Activated naive CD4-positive, alpha-beta T cell treated with anti-CD3 and anti-CD28 coated beads for 36 hours (primary cell): ENCODE measurements at regions of chrX and their contacts with region 1.

Region 1: DNA sequence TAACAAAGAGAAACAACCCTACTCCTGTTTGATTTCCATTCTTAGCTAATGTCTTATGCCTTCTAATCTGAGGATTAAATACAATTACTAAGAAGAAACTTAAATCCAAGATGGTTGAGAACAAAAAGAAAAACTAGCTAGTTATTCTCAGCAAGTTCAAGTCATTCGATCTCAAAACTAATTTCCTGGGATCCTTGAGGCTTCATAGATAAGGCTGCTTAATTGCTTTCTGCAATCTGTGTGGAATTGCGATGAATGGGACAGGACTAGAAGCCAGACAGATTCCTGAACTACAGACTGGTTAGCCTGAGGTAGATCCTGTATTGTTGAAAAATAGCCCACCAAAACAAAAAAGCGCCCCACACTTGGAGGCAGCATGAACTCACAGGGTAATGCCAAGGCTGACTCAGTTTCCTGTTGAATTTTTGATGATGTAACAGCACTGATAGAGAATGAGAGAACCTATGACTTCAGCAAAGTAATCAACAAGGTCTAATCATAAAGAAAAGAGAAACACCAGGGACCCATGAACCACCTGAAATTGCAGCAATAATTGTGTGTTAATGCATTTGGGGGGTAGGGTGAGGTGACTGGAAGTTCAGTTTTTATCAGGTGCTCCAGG is 33.9 kb downstream of the KLHL15 start:
- DNase-seq: peak; percentile 14
- H3K4me3 Mint-ChIP-seq: no peak overlapping the region
- H3K27ac Mint-ChIP-seq: peak overlapping the region; percentile 83
- H3K4me1 Mint-ChIP-seq: peaks cover 38% of the 10 kb centered on the region
- H3K27me3 Mint-ChIP-seq: no peaks in the 10 kb centered on the region

Region 2: DNA sequence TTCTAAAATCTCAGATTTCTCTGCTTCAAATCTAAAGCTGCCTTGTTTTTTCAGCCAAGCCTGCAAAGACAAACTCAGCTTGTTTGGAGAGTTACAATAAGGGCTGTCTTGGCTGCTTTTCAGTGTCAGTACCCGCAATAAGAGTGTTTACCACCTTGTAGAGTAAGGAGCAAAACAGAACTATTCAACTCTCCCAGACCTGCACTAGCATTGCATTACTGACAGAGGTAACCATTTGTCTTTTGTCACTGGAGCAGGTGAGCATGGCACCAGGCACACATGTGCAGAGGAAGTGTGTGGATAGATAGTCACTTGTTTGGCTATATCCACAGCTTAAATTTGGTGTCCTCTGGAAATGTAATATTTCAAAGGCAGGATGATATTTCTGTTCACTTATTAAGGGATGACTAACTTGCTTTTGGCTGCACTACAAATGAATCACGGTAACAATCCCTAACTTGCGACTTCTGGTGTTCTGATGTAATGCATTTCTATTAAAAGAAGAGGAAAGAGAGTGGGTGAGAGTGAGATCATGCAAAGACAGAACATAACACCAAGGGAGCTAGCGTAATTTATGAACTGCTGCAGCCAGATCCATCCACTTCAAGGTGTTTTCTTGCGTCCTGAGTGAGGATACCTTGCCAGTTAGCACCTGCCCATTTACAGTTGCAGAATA is 619.9 kb before region 1 on chrX:
- CTCF ChIA-PET with region 1: no interaction called
- intact Hi-C with region 1: no loop called
- DNase-seq: no peak
- H3K4me3 Mint-ChIP-seq: no peak overlapping the region
- H3K27ac Mint-ChIP-seq: no peak overlapping the region
- H3K4me1 Mint-ChIP-seq: no peaks in the 10 kb centered on the region
- H3K27me3 Mint-ChIP-seq: peaks cover 6% of the 10 kb centered on the region

Region 3: GRCh38 chrX:23667239-23668177 is 325.6 kb before region 1 on chrX and contains the start of gene PRDX4:
- CTCF ChIA-PET with region 1: no interaction called
- intact Hi-C with region 1: no loop called
- DNase-seq: peak; percentile 82
- H3K4me3 Mint-ChIP-seq: peak within 1 kb of the TSS; percentile 84
- H3K27ac Mint-ChIP-seq: peak within 1 kb of the TSS; percentile 90
- H3K4me1 Mint-ChIP-seq: peaks cover 30% of the 10 kb centered on the region
- H3K27me3 Mint-ChIP-seq: no peaks in the 10 kb centered on the region
- total RNA-seq, gene PRDX4: 39.6 to 40.0 TPM

Region 4: DNA sequence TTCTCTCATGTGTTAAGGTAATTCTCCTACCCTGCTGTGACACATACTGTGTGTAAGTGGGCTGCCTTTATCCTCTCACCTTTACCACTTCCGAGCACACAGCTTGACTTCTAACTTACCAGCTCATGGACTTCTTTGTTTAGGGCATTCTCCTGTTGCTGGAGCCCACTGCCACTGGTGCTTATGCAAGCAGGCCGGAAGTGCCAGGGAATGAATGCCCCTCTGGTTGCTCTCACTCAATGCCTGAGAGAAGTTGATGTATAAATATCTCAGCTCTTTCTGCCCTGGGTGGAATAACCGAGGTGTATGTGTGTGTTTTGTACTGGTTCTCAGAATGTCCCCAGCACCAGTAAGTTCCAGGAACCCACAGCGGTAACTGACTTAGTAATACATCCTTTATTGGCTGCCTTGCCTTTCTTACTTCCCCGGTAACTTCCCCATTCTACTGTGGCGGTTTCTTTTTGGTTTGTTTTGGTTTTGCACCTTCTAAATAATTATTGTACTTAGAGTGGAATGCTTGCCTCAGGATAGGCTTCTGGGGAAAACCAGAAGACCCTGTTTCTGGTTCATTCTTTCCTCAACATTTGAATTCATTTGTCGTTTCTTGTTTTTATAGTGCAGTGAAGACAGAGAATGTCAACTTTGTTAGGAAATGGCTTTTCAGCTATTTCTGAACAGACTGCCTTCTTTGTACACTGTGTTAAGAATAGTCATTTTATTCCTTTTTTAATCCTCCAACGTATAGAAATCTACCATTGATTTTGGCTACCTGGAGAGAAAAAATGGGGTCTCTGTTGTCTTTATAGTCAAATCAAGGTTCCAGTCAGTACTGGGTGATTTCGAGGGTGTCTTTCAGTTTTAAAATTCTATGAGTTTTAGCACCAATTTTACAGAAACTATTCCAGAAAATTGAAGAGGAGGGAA is 39.9 kb before region 1 on chrX:
- CTCF ChIA-PET with region 1: no interaction called
- intact Hi-C with region 1: loop called (anchors 1 kb)
- DNase-seq: peak; percentile 70
- H3K4me3 Mint-ChIP-seq: peak overlapping the region; percentile 79
- H3K27ac Mint-ChIP-seq: peak overlapping the region; percentile 97
- H3K4me1 Mint-ChIP-seq: peaks cover 16% of the 10 kb centered on the region
- H3K27me3 Mint-ChIP-seq: no peaks in the 10 kb centered on the region

Region 5: DNA sequence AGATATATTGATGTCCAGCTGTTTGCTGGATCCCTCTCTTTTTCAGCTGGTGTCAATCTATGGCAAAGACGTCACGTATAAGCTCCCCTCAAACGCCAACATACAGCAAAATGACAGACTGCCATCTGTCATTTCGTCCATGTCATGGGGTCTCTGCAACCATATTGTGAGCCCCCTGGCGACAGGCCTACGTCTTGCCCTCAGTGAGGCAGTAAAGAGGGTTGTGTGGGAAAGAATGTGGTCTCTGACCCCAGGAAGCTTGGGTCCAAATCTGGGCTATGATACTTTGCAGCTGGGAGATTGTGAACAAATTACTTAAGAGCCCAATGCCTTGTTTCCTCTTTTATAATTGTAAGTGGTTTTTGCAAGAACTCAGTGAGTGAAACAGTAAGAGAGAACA is 313.3 kb after region 1 on chrX:
- CTCF ChIA-PET with region 1: no interaction called
- intact Hi-C with region 1: no loop called
- DNase-seq: no peak
- H3K4me3 Mint-ChIP-seq: no peak overlapping the region
- H3K27ac Mint-ChIP-seq: no peak overlapping the region
- H3K4me1 Mint-ChIP-seq: peaks cover 4% of the 10 kb centered on the region
- H3K27me3 Mint-ChIP-seq: no peaks in the 10 kb centered on the region